CD4-positive, alpha-beta T cell (primary cell): ENCODE measurements at regions of chr10 and their contacts with region 1.

Region 1: DNA sequence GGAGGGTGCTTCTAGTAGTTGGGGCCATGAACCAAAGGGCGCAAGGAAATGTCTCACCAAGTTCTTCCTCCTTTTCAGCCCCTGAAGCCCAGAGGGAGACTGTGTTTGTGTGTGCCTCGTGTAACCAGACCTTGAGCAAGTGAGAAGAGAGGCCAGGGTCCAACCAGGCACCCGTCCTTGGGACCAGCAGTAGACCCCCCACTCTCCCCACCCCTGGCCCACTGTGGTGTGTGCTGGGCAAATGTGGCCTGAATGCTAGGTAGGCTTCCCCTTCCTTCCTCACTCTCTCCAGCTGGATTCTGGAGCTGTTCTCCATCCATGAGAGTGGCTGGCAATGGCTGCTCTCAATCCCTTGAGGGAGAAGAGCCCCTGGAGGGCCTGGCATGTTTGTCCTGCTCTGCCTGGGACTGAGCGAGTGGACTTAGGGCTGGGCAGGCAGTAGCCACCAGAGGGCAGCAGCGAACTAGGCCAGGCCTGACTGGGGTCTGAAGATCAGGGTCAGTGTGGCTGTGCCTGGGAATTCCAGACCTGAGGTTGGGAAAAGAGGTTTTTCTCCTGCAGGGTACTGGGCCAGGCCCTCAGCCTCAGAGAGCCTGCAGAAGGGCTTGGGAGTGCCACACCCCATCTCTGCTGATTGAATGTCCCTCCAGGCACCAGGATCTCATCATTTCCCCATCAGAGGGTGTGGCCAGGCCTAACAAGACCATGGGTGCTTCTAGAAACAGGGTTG is 12.5 kb downstream of the SFRP5 start:
- DNase-seq: peak; percentile 21 to 65 (median 42)
- ATAC-seq: peak; percentile 66
- H3K4me3 ChIP-seq: no peak overlapping the region
- H3K4me3 Mint-ChIP-seq: no peak overlapping the region
- H3K27ac ChIP-seq: no peak overlapping the region
- H3K27ac Mint-ChIP-seq: no peak overlapping the region
- H3K4me1 ChIP-seq: no peaks in the 10 kb centered on the region
- H3K4me1 Mint-ChIP-seq: no peaks in the 10 kb centered on the region
- H3K27me3 ChIP-seq: no peaks in the 10 kb centered on the region
- H3K27me3 Mint-ChIP-seq: no peaks in the 10 kb centered on the region
- CTCF ChIP-seq: peak; percentile 79

Region 2: DNA sequence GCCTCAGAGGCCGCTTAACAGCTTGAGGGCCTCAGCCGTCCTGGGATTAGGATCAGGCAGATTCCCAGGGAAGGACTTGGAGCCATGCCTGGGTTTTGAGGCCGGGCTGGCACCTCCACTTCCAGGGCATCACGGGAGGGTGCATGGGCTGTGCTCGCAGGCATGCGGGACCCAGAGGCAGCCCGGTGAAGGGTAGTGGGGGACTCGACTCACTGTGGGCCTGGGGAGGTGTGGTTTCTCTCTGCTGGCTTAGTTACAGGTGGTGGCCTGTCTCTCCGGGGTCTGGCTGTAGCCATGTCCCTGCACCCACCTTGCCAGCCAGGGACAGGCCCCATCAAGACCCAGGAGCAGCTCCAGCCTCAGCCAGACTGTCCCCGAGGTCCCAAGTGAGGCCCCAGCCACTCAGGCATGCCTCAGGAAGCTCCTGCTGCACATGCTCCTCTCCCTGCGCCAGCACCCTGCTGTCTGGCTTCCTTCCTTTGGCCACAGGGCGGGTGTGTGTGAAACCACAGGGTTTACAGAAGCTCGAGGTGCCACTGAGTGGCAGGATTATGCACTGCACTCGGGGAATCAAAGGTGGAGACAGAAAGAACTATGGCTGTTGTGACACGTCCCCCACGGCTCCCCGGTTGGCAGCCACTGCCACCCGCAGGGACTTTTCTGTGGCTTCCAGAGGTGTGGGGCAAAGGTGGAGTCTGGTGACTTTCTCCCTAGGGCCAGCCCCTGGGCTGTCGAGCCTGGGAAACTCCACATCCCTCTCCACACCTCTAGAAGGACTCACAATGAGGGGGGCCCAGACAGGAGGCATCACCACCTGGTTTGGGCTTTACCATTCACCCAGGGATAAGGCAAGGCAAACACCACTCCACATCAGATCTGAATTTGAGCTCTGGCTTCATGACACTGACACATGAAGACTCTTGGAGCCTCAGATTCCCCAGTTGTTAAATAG is 110.0 kb after region 1 on chr10:
- CTCF ChIA-PET with region 1: interaction called, 6 read pairs
- POLR2A ChIA-PET with region 1: interaction called, 5 read pairs
- intact Hi-C with region 1: loop called (anchors 1 kb)
- DNase-seq: peak; percentile 70 to 93 (median 78)
- ATAC-seq: peak; percentile 100
- H3K4me3 ChIP-seq: no peak overlapping the region
- H3K4me3 Mint-ChIP-seq: no peak overlapping the region
- H3K27ac ChIP-seq: peak overlapping the region in 1 of 2 donors; percentile 4
- H3K27ac Mint-ChIP-seq: peak overlapping the region; percentile 66
- H3K4me1 ChIP-seq: peaks cover 14% of the 10 kb centered on the region
- H3K4me1 Mint-ChIP-seq: peaks cover 11% of the 10 kb centered on the region
- H3K27me3 ChIP-seq: no peaks in the 10 kb centered on the region
- H3K27me3 Mint-ChIP-seq: peaks cover 11% of the 10 kb centered on the region
- CTCF ChIP-seq: peak; percentile 86

Region 3: GRCh38 chr10:98045785-98046389 is 286.6 kb after region 1 on chr10:
- CTCF ChIA-PET with region 1: no interaction called
- POLR2A ChIA-PET with region 1: no interaction called
- intact Hi-C with region 1: loop called in 1 of 2 experiments (anchors 10 kb)
- DNase-seq: peak; percentile 29 to 78 (median 44)
- ATAC-seq: peak; percentile 88
- H3K4me3 ChIP-seq: no peak overlapping the region
- H3K4me3 Mint-ChIP-seq: no peak overlapping the region
- H3K27ac ChIP-seq: no peak overlapping the region
- H3K27ac Mint-ChIP-seq: no peak overlapping the region
- H3K4me1 ChIP-seq: peaks cover 3% of the 10 kb centered on the region
- H3K4me1 Mint-ChIP-seq: no peaks in the 10 kb centered on the region
- H3K27me3 ChIP-seq: peaks cover 13 to 25% of the 10 kb centered on the region in 2 experiments
- H3K27me3 Mint-ChIP-seq: peaks cover 39% of the 10 kb centered on the region
- CTCF ChIP-seq: peak; percentile 90